ENCODE measurements at regions of chr3 and their contacts with region 1.

Region 1: GRCh38 chr3:188262913-188263683 is 109.1 kb downstream of the LPP start:
- DNase-seq: peak in 1 of 2 donors; percentile 74
- ATAC-seq: peak; percentile 41 to 67 (median 56)
- H3K4me3 ChIP-seq: no peak overlapping the region
- H3K27ac ChIP-seq: peak overlapping the region; percentile 98
- H3K4me1 ChIP-seq: peaks cover 75% of the 10 kb centered on the region
- H3K27me3 ChIP-seq: no peaks in the 10 kb centered on the region
- CTCF ChIP-seq: no peak

Region 2: GRCh38 chr3:188185717-188186251 is 77.3 kb before region 1 on chr3:
- intact Hi-C with region 1: loop called in 1 of 2 experiments (anchors 5 kb)
- DNase-seq: peak; percentile 30 to 71
- ATAC-seq: peak; percentile 84 to 90 (median 88)
- H3K4me3 ChIP-seq: peak overlapping the region; percentile 35
- H3K27ac ChIP-seq: peak overlapping the region; percentile 92
- H3K4me1 ChIP-seq: peaks cover 70% of the 10 kb centered on the region
- H3K27me3 ChIP-seq: no peaks in the 10 kb centered on the region
- CTCF ChIP-seq: no peak